Panc1 (cell line): ENCODE measurements at regions of chr12 and their contacts with region 1.

Region 1: DNA sequence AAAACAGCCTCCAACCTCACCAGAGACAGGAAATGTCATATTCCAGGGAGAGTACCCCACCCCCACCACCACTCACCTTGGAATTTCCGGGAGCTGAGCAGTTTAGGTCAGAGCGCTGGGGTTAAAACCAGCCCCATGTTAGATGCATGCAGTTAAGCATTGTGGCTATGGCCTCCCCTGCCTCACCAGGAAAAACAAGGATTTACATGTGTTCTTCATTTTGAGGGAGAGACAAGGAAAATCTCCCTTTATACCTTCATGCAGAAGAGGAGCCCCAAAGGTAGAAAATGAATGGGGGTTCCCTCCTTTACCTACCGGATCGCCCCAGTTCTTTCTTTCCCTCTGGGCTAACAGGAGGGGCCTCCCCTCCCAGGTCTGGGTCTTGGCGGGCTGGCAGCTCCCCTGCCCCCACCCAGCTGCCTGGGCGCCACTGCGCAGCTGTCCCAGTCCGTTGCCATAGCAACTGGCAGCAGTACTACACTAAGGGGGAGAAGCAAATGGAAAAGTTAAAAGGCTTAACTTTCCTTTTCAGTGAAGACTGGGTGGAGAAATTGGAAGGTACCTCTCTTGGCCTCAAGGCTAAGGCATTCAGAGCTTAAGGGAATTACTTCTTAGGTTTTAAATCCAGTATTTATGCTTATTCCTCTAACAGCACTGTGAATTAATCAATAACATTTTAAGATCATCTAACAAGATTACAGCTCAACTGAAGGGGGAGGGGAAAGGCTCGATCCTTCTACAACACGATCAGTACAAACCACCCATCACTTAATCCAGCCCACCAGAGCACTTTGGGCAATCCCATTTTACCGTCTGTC is 20.5 kb downstream of the CBX5 start:
- DNase-seq: no peak
- ATAC-seq: peak; percentile 92
- H3K4me3 ChIP-seq: peak overlapping the region; percentile 29 to 52
- H3K27ac ChIP-seq: peak overlapping the region; percentile 99
- H3K4me1 ChIP-seq: peaks cover 56% of the 10 kb centered on the region
- H3K27me3 ChIP-seq: no peaks in the 10 kb centered on the region
- CTCF ChIP-seq: no peak

Region 2: GRCh38 chr12:53952335-53952694 is 307.1 kb before region 1 on chr12:
- CTCF ChIA-PET with region 1: no interaction called
- POLR2A ChIA-PET with region 1: no interaction called
- in situ Hi-C with region 1: no loop called
- intact Hi-C with region 1: no loop called
- DNase-seq: no peak
- ATAC-seq: no peak
- H3K4me3 ChIP-seq: peak overlapping the region in 1 of 2 experiments; percentile 26; a peak in 1 of 4 replicates
- H3K27ac ChIP-seq: peak overlapping the region; percentile 98
- H3K4me1 ChIP-seq: peaks cover 85% of the 10 kb centered on the region
- H3K27me3 ChIP-seq: no peaks in the 10 kb centered on the region
- CTCF ChIP-seq: no peak

Region 3: DNA sequence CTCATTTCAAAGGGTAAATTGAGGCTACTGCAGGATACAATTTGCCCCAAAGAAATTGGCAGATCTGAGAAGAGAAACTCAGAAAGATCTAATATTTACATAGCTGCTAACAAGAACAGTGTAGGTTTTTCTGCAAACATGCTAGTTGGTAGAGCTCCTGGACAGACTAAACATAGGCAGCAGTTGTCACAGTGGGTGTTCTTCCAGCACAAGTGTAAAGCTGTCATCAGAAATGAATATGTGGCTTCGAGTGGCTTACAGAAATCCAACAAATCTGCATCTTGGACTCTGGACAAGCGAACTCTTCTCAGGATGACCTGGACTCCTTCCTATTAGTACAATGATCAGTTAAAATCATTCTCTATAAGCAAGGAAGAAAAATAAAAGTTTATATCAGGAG is 14.6 kb after region 1 on chr12:
- CTCF ChIA-PET with region 1: interaction called, 4 read pairs
- POLR2A ChIA-PET with region 1: interaction called, 24 read pairs
- in situ Hi-C with region 1: no loop called
- intact Hi-C with region 1: no loop called
- DNase-seq: no peak
- ATAC-seq: no peak
- H3K4me3 ChIP-seq: no peak overlapping the region
- H3K27ac ChIP-seq: peak overlapping the region; percentile 35; the same call in 1 of the 2 replicates
- H3K4me1 ChIP-seq: peaks cover 25% of the 10 kb centered on the region
- H3K27me3 ChIP-seq: no peaks in the 10 kb centered on the region
- CTCF ChIP-seq: no peak

Region 4: GRCh38 chr12:54279866-54280467 is 20.6 kb after region 1 on chr12 and contains the start of gene CBX5:
- CTCF ChIA-PET with region 1: no interaction called
- POLR2A ChIA-PET with region 1: interaction called, 10 read pairs
- in situ Hi-C with region 1: no loop called
- intact Hi-C with region 1: no loop called
- DNase-seq: no peak
- ATAC-seq: peak; percentile 72
- H3K4me3 ChIP-seq: peak within 1 kb of the TSS; percentile 93 to 99
- H3K27ac ChIP-seq: peak within 1 kb of the TSS; percentile 100
- H3K4me1 ChIP-seq: peaks cover 28% of the 10 kb centered on the region
- H3K27me3 ChIP-seq: no peaks in the 10 kb centered on the region
- CTCF ChIP-seq: no peak
- total RNA-seq, gene CBX5: 130 TPM

Region 5: GRCh38 chr12:54368709-54369583 is 109.5 kb after region 1 on chr12:
- CTCF ChIA-PET with region 1: no interaction called
- POLR2A ChIA-PET with region 1: no interaction called
- in situ Hi-C with region 1: no loop called
- intact Hi-C with region 1: no loop called
- DNase-seq: peak; percentile 79
- ATAC-seq: peak; percentile 79
- H3K4me3 ChIP-seq: peak overlapping the region; percentile 42 to 75
- H3K27ac ChIP-seq: peak overlapping the region; percentile 72
- H3K4me1 ChIP-seq: no peaks in the 10 kb centered on the region; the same call in 1 of the 2 replicates
- H3K27me3 ChIP-seq: no peaks in the 10 kb centered on the region
- CTCF ChIP-seq: peak; percentile 93

Region 6: GRCh38 chr12:54390668-54391551 is 131.5 kb after region 1 on chr12:
- CTCF ChIA-PET with region 1: no interaction called
- POLR2A ChIA-PET with region 1: no interaction called
- in situ Hi-C with region 1: no loop called
- intact Hi-C with region 1: no loop called
- DNase-seq: no peak
- ATAC-seq: peak; percentile 64
- H3K4me3 ChIP-seq: peak overlapping the region; percentile 36 to 40
- H3K27ac ChIP-seq: no peak overlapping the region
- H3K4me1 ChIP-seq: no peaks in the 10 kb centered on the region; the same call in none of the 2 replicates
- H3K27me3 ChIP-seq: no peaks in the 10 kb centered on the region
- CTCF ChIP-seq: peak; percentile 60; the same call in 1 of the 2 replicates

Region 7: DNA sequence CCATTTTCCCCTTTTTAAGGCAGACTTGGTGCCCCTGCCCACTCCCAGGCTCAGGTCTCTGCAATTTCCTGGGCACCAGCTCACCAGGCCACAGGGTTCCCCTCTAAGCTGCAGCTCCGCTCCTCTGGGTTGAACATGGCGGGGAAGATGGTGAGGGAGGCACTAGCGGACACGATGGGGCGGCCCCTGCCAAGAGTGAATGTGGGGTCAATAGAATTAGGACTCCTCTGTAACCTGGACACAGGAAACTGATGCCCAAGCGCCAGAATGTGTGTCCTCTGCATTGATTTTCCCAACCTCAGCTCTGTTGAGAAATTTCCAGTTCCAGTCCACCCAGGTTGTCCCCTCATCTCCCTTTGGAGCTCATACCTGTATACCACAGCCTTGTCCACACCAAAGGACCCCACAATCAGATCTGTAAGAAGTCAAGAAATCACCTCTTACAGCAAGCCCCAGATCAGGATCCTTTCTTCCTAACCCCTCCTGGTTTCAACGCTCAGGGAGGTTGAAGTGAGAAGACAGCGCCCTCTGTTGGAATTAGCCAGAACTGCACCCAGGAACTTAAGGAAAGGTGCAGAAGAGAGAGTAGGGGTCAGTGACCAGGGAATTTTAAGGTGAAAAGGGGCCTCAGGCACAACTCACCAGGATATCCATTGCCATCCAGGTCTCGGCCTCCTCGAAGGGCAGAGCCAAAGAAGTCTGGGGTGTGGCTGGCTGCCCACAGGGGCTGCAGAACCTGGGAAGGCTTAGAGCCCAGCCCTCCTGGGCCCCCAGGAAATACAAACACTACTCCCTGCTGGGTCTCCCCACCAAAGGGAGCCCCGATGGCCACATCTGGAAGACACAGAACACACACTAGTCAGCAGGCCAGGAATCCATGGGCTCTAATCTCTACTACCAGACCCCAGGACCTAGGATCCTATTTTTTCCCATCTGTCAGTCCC is 144.9 kb after region 1 on chr12:
- CTCF ChIA-PET with region 1: no interaction called
- POLR2A ChIA-PET with region 1: no interaction called
- in situ Hi-C with region 1: no loop called
- intact Hi-C with region 1: no loop called
- DNase-seq: peak; percentile 39
- ATAC-seq: 0 out of 2 replicates have a peak, but pooled peaks have one; percentile 41
- H3K4me3 ChIP-seq: no peak overlapping the region
- H3K27ac ChIP-seq: no peak overlapping the region
- H3K4me1 ChIP-seq: no peaks in the 10 kb centered on the region
- H3K27me3 ChIP-seq: no peaks in the 10 kb centered on the region
- CTCF ChIP-seq: peak; percentile 97